ENCODE measurements at regions of chr1 and their contacts with region 1.

Region 1: GRCh38 chr1:175319418-175320230 is 127.0 kb upstream of the KIAA0040 start:
- DNase-seq: peak; percentile 66
- CTCF ChIP-seq: peak; percentile 89

Region 2: GRCh38 chr1:174040387-174040786 is 1279.2 kb before region 1 on chr1:
- in situ Hi-C with region 1: no loop called
- DNase-seq: no peak
- CTCF ChIP-seq: no peak

Region 3: DNA sequence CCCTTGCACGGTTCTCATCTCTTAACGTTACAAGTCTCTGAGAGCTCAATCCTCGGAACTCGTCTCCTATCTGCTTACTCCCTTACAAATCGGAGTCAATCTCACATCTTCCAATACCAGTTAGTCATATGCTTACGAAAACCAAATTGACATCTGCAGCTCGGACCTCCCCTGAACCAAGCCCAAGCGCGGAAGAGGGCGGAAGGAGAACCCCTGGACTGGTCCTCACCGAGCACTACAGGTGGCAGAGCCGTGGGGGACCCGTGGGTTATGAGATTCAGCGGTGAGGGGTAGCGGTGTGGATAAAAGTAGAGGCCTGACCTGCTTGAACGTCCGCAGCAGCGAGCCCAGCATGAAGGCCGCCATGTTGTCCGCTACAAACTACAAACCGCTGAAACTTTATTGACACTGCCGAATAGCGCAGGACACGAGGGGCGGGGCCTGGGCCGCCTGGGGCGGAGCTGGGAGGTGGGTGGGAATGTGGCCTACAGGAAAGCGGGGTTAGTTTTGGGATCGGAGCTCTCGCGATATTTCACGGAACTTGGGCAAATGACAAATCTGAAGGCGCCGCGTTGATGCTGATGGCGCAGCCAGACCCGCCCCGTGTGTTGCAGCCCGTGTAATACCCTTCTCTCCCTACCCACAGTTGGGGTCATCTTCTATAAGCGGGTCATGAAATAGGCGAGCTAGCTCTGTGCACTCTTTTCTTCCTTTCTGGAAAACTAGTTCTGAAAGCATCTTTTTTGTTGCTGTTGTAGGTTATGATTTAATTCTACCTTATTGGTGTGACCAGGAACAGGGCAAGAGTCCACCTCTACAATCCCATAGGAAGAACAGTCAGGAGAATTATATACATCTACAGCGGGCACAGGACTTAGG is 296.3 kb before region 1 on chr1 and contains the start of gene MRPS14:
- in situ Hi-C with region 1: loop called (anchors 10 kb)
- DNase-seq: peak; percentile 95
- CTCF ChIP-seq: no peak

Region 4: DNA sequence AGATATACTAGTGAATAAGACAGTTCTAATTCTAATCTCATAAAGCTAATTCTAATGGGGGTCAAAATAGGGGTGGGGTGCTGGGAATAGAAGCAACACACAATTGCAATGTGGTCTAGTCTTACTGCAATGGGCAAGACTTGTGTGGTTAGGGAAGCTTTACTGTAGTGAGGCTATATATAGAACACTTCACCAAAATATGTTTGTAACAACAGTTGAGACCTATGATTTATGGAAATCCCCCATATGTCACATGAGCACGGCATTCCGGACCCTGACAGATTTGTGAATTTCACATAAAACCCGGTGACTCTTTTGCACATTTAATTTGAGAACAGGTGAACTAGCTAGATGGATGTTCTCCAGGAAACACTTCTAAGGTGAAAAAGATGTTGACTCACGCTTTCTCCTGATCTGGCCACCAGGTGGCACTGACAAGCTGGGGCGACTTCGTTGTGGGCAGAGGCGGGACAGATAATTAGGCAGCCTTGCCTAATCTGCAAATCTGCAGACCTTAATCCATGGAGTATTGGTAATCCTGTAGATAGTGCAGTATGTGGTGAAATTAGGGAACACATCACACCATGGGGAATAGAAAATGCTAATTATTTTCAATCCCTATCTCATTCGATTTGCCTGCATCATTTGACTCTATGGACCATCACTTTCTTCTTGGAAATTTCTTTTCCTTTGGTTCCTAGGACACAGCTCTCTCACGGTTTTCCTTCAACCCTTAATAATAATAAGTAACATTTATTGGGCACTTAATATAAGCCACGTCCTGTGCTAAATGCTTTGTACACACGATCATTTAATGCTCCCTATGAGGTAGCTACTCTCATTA is 164.8 kb before region 1 on chr1:
- in situ Hi-C with region 1: loop called (anchors 5 kb)
- DNase-seq: peak; percentile 73
- CTCF ChIP-seq: peak; percentile 88

Region 5: GRCh38 chr1:175530183-175530582 is 210.6 kb after region 1 on chr1:
- in situ Hi-C with region 1: no loop called
- DNase-seq: no peak
- CTCF ChIP-seq: no peak